Dorsolateral prefrontal cortex (tissue), 120 donors: ENCODE measurements at regions of chr16 and their contacts with region 1.

Region 1: GRCh38 chr16:48499923-48500381 is 110.0 kb downstream of the N4BP1 start:
- DNase-seq: peak in 1 of 10 donors; percentile 21
- H3K4me3 ChIP-seq: no peak overlapping the region
- H3K27ac ChIP-seq: peak overlapping the region in 52 of 59 donors; percentile 10 to 86 (median 64)
- H3K27me3 ChIP-seq: no peaks in the 10 kb centered on the region
- CTCF ChIP-seq: no peak

Region 2: DNA sequence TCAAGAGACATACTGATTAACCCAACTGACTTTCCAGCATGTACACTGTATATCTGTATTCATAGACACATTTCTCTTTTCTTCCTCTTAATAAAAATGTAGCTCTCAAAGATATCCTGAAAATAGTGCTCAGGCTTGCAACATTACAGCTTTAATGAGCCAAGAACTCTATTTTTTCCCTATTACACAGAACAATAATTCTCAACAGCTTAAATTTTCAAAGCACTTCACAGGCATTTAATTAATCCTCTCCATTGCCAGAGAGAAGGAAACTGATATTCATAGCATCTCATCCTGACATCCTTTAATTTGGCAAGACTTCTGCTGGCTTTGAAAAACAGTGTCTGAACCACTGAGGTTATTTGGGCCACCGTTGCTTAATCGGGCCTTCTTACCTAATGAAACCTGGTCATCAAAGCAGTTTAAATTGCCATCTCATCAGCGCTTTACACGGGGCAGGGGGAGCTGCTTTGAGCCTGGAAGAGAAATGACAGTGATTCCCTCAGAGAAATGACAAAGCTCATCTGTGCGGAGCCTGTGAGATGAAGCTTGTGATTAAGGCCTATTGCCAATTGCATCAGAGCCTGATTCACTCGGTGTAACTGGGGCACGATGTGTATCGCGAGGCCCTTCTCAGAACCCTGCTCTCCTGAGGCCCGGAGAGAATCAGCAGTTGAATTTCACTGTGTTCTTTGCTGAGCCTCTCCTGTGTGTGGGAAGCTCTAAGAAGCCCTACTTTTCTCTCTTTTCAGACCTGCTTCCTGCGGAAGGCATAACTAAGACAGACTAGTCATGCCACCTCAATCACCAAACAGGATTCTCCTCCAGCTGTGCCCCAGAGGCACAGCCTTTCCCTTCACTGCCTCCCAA is 106.2 kb before region 1 on chr16:
- intact Hi-C with region 1: loop called in 1 of 2 experiments (anchors 5 kb)
- DNase-seq: peak in 9 of 10 donors; percentile 51 to 88 (median 73)
- H3K4me3 ChIP-seq: peak overlapping the region in 27 of 59 donors; percentile 2 to 45 (median 17)
- H3K27ac ChIP-seq: peak overlapping the region; percentile 76 to 99 (median 94)
- H3K27me3 ChIP-seq: no peaks in the 10 kb centered on the region
- CTCF ChIP-seq: peak in 11 of 56 donors; percentile 10 to 46 (median 16)